GM23248 (cell line): ENCODE measurements at regions of chr18 and their contacts with region 1.

Region 1: GRCh38 chr18:3869848-3870247 is 419.9 kb downstream of the TGIF1 start:
- DNase-seq: peak; percentile 76
- H3K4me3 ChIP-seq: no peak overlapping the region
- H3K27ac ChIP-seq: no peak overlapping the region
- H3K4me1 ChIP-seq: peaks cover 13% of the 10 kb centered on the region
- H3K27me3 ChIP-seq: no peaks in the 10 kb centered on the region

Region 2: GRCh38 chr18:3297025-3297984 is 572.5 kb before region 1 on chr18:
- in situ Hi-C with region 1: loop called (anchors 25 kb)
- DNase-seq: peak; percentile 78
- H3K4me3 ChIP-seq: peak overlapping the region; percentile 66
- H3K27ac ChIP-seq: no peak overlapping the region
- H3K4me1 ChIP-seq: no peaks in the 10 kb centered on the region
- H3K27me3 ChIP-seq: no peaks in the 10 kb centered on the region

Region 3: DNA sequence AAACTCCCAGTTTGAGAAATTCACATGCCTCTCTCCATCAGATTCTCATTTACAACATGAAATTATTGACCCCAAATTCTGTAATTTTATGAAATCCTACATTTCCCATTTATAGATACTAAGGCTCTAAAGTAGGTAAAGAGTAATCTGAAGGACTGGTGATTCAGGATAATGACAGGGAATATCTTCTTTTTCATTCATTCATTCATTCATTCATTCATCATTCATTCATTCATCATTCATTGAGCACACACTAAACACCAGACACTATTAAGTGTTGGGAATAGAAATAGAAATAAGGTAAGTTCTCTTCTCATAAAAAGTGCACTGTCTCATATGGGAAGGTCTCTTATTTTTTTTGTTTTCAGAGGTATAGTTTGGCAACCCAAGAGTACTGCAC is 303.0 kb before region 1 on chr18:
- in situ Hi-C with region 1: no loop called
- DNase-seq: no peak
- H3K4me3 ChIP-seq: no peak overlapping the region
- H3K27ac ChIP-seq: no peak overlapping the region
- H3K4me1 ChIP-seq: no peaks in the 10 kb centered on the region
- H3K27me3 ChIP-seq: no peaks in the 10 kb centered on the region

Region 4: DNA sequence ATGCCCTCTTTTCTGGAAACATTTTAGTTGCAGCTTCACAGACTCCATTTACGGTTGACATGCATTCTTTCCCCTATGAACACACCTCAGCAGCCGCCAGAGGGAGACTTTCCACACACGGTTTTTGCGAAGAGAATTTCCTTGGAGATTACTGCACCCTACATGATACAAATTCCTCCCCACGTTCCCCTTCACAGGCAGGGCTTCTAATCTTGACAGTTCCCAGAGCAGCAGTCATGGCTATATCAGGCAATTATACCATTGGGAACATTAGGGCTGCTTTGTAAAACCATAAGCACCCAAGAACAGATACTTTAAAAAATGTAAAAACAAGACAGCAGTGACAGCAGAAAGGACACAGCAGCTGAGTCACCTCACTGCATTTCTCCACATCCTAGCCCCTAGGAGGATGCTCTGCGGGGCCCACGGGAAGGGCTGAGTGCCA is 166.1 kb before region 1 on chr18:
- in situ Hi-C with region 1: loop called (anchors 10 kb)
- DNase-seq: peak; percentile 80
- H3K4me3 ChIP-seq: no peak overlapping the region
- H3K27ac ChIP-seq: no peak overlapping the region
- H3K4me1 ChIP-seq: peaks cover 3% of the 10 kb centered on the region; the same call in 1 of the 2 replicates
- H3K27me3 ChIP-seq: no peaks in the 10 kb centered on the region

Region 5: GRCh38 chr18:3995476-3996102 is 125.7 kb after region 1 on chr18:
- in situ Hi-C with region 1: loop called (anchors 10 kb)
- DNase-seq: peak; percentile 74
- H3K4me3 ChIP-seq: no peak overlapping the region
- H3K27ac ChIP-seq: no peak overlapping the region
- H3K4me1 ChIP-seq: peaks cover 5% of the 10 kb centered on the region; the same call in 1 of the 2 replicates
- H3K27me3 ChIP-seq: no peaks in the 10 kb centered on the region